MCF 10A (cell line): ENCODE measurements at regions of chr1 and their contacts with region 1.

Region 1: DNA sequence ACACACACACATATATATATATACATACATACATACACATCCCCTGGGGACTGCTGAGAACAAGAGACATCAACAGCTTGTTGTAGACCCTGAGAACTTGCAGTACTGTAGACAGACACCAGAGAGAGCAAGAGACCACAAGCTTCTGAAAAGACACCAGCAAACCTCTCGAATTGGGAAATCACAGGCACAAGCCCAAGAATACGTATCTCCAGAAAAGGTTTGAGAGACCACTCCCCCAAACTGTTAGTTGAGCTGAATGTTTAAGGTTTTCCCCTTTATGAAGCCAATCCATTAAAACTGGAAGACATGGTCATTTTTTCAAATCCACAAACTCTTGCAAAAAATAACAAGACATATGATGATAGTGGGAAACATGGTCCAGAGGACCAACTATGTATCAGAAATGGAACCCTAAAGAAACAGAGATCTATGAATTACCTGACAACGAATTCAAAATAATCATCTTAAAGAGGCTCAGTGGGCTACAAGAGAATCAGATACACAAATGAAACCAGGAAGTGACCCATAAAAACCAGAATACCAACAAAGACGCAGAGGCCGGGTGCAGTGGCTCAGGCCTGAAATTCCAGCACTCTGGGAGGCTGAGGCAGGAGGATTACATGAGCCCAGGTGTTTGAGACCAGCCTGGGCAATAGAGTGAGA is 45.1 kb downstream of the SLC2A1 start:
- DNase-seq: peak; percentile 88
- H3K4me3 Mint-ChIP-seq: no peak overlapping the region
- H3K27ac Mint-ChIP-seq: no peak overlapping the region
- H3K4me1 Mint-ChIP-seq: no peaks in the 10 kb centered on the region
- H3K27me3 Mint-ChIP-seq: no peaks in the 10 kb centered on the region
- CTCF ChIP-seq: peak; percentile 88

Region 2: DNA sequence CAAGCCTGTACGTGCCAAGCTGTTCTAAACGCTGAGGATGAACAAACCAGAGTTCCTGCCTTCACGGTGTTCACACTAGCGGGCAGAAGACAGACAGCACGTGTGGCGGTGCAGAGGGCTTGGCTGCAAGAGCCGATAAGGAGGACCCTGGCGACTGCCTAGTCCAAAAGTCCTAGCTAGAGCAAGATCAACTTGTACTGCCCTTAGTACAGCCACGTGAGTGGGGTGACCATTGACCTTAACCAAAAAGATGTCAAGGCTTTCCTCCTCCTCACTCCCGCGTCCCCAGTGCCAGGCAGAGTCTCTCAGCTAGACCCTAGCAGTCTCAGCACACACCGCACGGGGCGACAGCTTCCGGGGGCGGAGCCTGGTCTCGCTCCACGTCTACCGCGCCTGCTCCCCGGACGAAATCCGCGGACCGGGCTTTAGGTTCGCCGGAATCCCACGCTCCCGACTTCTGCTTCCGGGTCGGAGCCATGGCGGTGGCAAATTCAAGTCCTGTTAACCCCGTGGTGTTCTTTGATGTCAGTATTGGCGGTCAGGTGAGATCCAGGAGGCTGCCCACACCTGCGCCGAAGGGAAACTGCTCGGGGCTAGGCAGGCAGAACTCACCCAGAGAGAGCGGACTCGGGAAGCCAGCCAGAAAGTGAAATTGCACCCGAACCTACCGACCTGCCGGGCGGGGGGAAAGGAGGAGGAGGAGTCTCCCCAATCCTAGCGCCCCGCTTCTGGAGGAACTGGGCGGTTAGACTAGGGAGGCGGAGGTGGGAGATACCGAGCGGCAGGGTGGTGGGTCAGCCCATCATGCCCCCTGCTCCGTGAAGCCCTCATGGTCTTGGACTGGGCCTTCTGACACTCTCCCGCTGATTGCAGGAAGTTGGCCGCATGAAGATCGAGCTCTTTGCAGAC is 255.3 kb before region 1 on chr1 and contains the start of gene PPIH:
- CTCF ChIA-PET with region 1: no interaction called
- POLR2A ChIA-PET with region 1: no interaction called
- intact Hi-C with region 1: no loop called
- DNase-seq: peak; percentile 92
- H3K4me3 Mint-ChIP-seq: peak within 1 kb of the TSS; percentile 97
- H3K27ac Mint-ChIP-seq: peak within 1 kb of the TSS; percentile 95
- H3K4me1 Mint-ChIP-seq: peaks cover 13% of the 10 kb centered on the region
- H3K27me3 Mint-ChIP-seq: peaks cover under 1% of the 10 kb centered on the region
- CTCF ChIP-seq: no peak
- total RNA-seq, gene PPIH: 52.4 and 55.9 TPM in 2 replicates

Region 3: GRCh38 chr1:42777852-42778251 is 135.7 kb before region 1 on chr1:
- CTCF ChIA-PET with region 1: interaction called, 6 read pairs
- POLR2A ChIA-PET with region 1: no interaction called
- intact Hi-C with region 1: loop called (anchors 1 kb)
- DNase-seq: peak; percentile 58
- H3K4me3 Mint-ChIP-seq: no peak overlapping the region
- H3K27ac Mint-ChIP-seq: no peak overlapping the region
- H3K4me1 Mint-ChIP-seq: no peaks in the 10 kb centered on the region
- H3K27me3 Mint-ChIP-seq: no peaks in the 10 kb centered on the region
- CTCF ChIP-seq: peak; percentile 61

Region 4: DNA sequence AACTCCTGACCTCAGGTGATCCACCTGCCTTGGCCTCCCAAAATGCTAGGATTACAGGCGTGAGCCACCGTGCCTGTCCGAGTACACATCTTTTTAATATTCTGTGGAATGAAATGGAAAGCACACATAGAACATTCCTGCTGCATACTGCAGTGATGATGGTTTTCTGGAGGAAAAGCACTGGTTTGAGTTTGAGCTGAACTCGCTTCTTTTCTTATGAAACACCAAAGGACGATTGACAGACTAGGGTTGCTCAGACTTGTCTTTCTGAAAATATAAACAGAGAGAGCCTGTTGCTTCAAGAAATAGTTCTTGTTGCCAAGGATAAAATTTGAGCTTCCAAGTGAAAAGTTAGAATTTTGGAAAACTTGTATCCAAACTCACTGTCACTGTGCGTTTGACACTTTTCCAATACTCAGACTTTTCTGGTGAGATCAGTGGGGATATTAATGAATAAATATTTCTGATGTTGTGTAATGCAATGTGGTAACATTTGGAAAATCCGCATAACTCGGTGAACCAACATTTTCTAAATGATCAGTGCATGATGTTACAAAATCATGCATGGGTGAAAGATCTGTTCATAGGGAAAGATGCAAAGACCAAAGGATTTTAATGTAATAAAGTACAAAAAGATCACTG is 111.6 kb before region 1 on chr1:
- CTCF ChIA-PET with region 1: no interaction called
- POLR2A ChIA-PET with region 1: no interaction called
- intact Hi-C with region 1: no loop called
- DNase-seq: no peak
- H3K4me3 Mint-ChIP-seq: no peak overlapping the region
- H3K27ac Mint-ChIP-seq: no peak overlapping the region
- H3K4me1 Mint-ChIP-seq: no peaks in the 10 kb centered on the region
- H3K27me3 Mint-ChIP-seq: no peaks in the 10 kb centered on the region
- CTCF ChIP-seq: no peak

Region 5: GRCh38 chr1:42825036-42825851 is 88.3 kb before region 1 on chr1:
- CTCF ChIA-PET with region 1: no interaction called
- POLR2A ChIA-PET with region 1: no interaction called
- intact Hi-C with region 1: no loop called
- DNase-seq: no peak
- H3K4me3 Mint-ChIP-seq: no peak overlapping the region
- H3K27ac Mint-ChIP-seq: no peak overlapping the region
- H3K4me1 Mint-ChIP-seq: peaks cover 6% of the 10 kb centered on the region
- H3K27me3 Mint-ChIP-seq: no peaks in the 10 kb centered on the region
- CTCF ChIP-seq: no peak

Region 6: GRCh38 chr1:43065191-43065590 is 151.6 kb after region 1 on chr1:
- CTCF ChIA-PET with region 1: interaction called, 309 read pairs
- POLR2A ChIA-PET with region 1: interaction called, 3 read pairs
- intact Hi-C with region 1: no loop called
- DNase-seq: peak; percentile 81
- H3K4me3 Mint-ChIP-seq: no peak overlapping the region
- H3K27ac Mint-ChIP-seq: no peak overlapping the region
- H3K4me1 Mint-ChIP-seq: no peaks in the 10 kb centered on the region
- H3K27me3 Mint-ChIP-seq: no peaks in the 10 kb centered on the region
- CTCF ChIP-seq: no peak

Region 7: GRCh38 chr1:43414634-43415223 is 501.2 kb after region 1 on chr1:
- CTCF ChIA-PET with region 1: no interaction called
- POLR2A ChIA-PET with region 1: no interaction called
- intact Hi-C with region 1: loop called (anchors 10 kb)
- DNase-seq: peak; percentile 52
- H3K4me3 Mint-ChIP-seq: no peak overlapping the region
- H3K27ac Mint-ChIP-seq: peak overlapping the region; percentile 21
- H3K4me1 Mint-ChIP-seq: no peaks in the 10 kb centered on the region
- H3K27me3 Mint-ChIP-seq: no peaks in the 10 kb centered on the region
- CTCF ChIP-seq: peak; percentile 37